IMR-90 (cell line): ENCODE measurements at regions of chr1 and their contacts with region 1.

Region 1: GRCh38 chr1:150363426-150364230 is at the start of gene RPRD2:
- DNase-seq: peak; percentile 99
- ATAC-seq: peak; percentile 96
- H3K4me3 ChIP-seq: peak within 1 kb of the TSS; percentile 59
- H3K27ac ChIP-seq: peak within 1 kb of the TSS; percentile 98
- H3K4me1 ChIP-seq: no peaks in the 10 kb centered on the region
- H3K27me3 ChIP-seq: no peaks in the 10 kb centered on the region
- CTCF ChIP-seq: 0 out of 2 replicates have a peak, but pooled peaks have one; percentile 0
- POLR2A ChIP-seq: peak; percentile 82
- RAD21 ChIP-seq: no peak
- total RNA-seq, gene RPRD2: 3.9 and 5.3 TPM in 2 replicates

Region 2: GRCh38 chr1:150537732-150538684 is 174.4 kb after region 1 on chr1:
- CTCF ChIA-PET with region 1: no interaction called
- POLR2A ChIA-PET with region 1: no interaction called
- dilution Hi-C with region 1: no loop called
- in situ Hi-C with region 1: no loop called
- intact Hi-C with region 1: loop called (anchors 10 kb)
- DNase-seq: peak; percentile 87
- ATAC-seq: peak; percentile 93
- H3K4me3 ChIP-seq: no peak overlapping the region
- H3K27ac ChIP-seq: peak overlapping the region; percentile 83
- H3K4me1 ChIP-seq: peaks cover 27% of the 10 kb centered on the region
- H3K27me3 ChIP-seq: no peaks in the 10 kb centered on the region
- CTCF ChIP-seq: no peak
- POLR2A ChIP-seq: no peak
- RAD21 ChIP-seq: no peak